ENCODE measurements at regions of chr16 and their contacts with region 1.

Region 1: DNA sequence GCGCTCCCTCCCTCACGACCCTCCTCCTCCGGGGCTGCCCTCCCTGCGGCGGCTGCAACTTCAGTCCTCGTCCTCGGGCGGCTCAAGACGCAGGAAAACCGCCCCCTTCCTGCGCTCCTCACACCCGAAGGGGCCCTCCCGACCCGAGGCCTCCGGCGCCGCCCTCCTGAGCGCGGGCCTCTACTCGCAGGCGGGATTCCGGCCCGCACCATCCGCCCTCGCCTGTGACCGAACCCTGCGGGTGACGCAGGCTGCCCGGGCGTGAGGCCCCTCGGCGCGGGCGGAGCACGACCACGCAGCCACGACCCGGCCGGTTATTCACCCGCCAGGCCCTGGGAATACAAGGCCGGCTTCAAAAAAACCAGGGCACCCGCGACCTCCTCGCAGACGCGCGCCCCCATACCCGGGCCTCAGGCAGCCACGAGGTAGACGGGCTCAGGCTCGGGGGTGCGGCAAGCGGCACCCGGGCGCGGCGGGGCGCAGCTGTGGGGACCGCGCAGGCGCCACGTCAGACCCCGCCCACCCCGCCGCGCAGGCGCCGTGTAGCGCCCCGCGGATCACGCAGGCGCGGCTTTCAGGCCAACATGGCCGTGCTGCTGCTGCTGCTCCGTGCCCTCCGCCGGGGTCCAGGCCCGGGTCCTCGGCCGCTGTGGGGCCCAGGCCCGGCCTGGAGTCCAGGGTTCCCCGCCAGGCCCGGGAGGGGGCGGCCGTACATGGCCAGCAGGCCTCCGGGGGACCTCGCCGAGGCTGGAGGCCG is at the start of gene SPG7:
- DNase-seq: peak; percentile 90
- ATAC-seq: peak; percentile 77
- H3K4me3 Mint-ChIP-seq: peak within 1 kb of the TSS; percentile 91
- H3K27ac Mint-ChIP-seq: peak within 1 kb of the TSS; percentile 92
- H3K4me1 Mint-ChIP-seq: peaks cover 38% of the 10 kb centered on the region
- H3K27me3 Mint-ChIP-seq: no peaks in the 10 kb centered on the region
- total RNA-seq, gene SPG7: 94.7 to 98.4 TPM

Region 2: DNA sequence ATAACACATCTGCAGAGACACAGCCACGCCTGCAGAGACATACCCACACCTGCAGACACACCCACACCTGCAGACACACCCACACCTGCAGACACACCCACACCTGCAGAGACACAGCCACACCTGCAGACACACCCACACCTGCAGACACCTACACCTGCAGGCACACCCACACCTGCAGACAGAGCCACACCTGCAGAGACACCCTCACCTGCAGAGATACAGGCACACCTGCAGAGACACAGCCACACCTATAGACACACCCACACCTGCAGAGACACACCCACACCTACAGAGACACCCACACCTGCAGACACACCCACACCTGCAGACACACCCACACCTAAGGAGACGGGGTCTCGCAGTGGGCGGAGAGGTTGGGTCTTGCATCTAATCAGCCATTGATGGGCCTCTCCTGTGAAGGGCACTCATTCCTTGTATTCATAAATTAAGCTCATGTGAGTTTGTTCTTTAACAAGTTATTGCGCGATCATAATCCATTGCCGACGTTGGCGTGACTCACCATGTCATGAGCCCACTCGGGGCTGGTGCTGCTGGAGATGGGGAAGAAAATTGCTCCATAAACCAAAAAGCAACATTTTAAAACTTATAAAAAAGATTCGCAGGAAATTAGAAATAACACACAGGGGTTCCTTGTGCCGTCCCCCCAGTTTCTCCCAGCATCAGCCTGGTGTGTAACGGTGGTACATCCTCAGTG is 365.4 kb before region 1 on chr16:
- CTCF ChIA-PET with region 1: no interaction called
- POLR2A ChIA-PET with region 1: no interaction called
- DNase-seq: no peak
- ATAC-seq: no peak
- H3K4me3 Mint-ChIP-seq: no peak overlapping the region
- H3K27ac Mint-ChIP-seq: no peak overlapping the region
- H3K4me1 Mint-ChIP-seq: no peaks in the 10 kb centered on the region
- H3K27me3 Mint-ChIP-seq: no peaks in the 10 kb centered on the region

Region 3: DNA sequence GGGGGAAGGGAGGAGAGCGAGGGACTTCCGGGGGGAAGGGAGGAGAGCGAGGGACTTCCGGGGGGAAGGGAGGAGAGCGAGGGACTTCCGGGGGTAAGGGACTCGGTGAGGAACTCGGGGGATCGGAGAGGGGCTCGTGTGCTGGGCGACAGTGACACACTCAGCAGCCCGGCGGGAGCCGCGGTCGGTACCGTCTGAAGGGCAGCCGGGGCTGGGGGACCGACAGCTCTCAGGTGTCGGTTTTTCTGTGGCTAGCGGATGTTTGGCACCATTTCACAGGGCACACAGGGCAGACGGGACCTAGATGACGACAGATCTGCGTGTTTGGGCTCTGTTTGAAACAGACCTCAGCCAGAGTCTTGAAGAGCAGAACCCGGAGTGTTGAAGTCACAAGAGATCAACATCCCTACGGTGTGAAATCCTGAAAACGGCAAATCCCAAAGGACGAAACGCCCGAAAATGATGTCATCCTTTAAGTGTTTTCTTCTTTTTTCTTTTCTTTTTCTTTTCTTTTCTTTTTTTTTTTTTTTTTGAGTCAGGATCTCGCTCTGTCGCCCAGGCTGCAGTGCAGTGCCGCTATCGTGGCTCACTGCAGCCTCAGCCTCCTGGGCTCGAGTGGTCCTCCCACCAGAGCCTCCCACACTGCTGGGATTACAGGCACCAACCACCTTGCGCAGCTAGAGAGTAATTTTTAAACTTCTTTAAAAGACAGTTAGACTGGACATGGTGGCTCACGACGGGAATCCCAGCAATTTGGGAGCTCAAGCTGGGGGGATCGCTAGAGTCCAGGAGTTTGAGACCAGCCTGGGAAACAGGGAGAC is 266.6 kb before region 1 on chr16:
- CTCF ChIA-PET with region 1: interaction called, 10 read pairs
- POLR2A ChIA-PET with region 1: no interaction called
- DNase-seq: peak; percentile 81
- ATAC-seq: peak; percentile 89
- H3K4me3 Mint-ChIP-seq: peak overlapping the region; percentile 99
- H3K27ac Mint-ChIP-seq: peak overlapping the region; percentile 100
- H3K4me1 Mint-ChIP-seq: peaks cover 22% of the 10 kb centered on the region
- H3K27me3 Mint-ChIP-seq: no peaks in the 10 kb centered on the region

Region 4: GRCh38 chr16:89297156-89297883 is 210.7 kb before region 1 on chr16:
- CTCF ChIA-PET with region 1: interaction called, 10 read pairs
- POLR2A ChIA-PET with region 1: no interaction called
- DNase-seq: no peak
- ATAC-seq: no peak
- H3K4me3 Mint-ChIP-seq: no peak overlapping the region
- H3K27ac Mint-ChIP-seq: peak overlapping the region; percentile 50
- H3K4me1 Mint-ChIP-seq: peaks cover 47% of the 10 kb centered on the region
- H3K27me3 Mint-ChIP-seq: no peaks in the 10 kb centered on the region

Region 5: DNA sequence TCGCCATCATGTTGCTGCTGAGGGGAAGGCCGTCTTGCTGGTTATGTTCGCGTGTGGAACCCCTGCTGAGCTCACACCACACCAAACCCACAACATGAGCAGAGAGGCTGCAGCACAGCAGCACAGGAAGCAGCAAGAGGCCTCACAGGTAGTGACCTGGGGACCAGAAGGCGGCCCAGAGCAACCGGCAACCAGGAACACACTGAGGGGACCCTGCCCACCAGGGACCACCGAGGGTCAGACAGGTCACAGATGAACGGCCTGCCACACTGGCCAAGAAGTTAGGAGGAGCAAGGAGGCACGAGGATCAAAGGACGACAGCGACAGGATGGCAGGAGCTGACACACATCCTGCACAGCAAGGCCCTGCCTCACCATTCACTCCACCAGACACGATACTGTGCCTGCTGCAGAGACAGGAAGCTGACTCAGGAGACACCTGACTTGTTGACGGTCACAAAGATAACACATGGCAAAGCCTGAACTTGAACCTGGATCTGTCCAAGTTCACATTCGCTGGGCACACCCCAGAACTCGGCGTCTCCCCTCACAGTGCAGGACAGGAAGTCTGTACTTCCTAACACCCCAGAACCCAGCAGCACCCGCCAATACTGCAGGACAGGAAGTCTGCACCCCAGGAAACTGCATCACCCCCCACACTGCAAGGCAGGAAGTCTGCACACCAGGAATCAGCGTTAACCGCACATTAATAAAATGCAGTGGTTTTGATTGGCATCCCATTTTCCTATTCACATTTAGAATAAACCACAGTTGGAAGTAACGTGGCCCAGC is 192.0 kb before region 1 on chr16:
- CTCF ChIA-PET with region 1: interaction called, 15 read pairs
- POLR2A ChIA-PET with region 1: interaction called, 5 read pairs
- DNase-seq: peak; percentile 90
- ATAC-seq: peak; percentile 88
- H3K4me3 Mint-ChIP-seq: peak overlapping the region; percentile 76
- H3K27ac Mint-ChIP-seq: peak overlapping the region; percentile 100
- H3K4me1 Mint-ChIP-seq: peaks cover 97% of the 10 kb centered on the region
- H3K27me3 Mint-ChIP-seq: no peaks in the 10 kb centered on the region

Region 6: GRCh38 chr16:89334988-89335802 is 172.8 kb before region 1 on chr16:
- CTCF ChIA-PET with region 1: interaction called, 12 read pairs
- POLR2A ChIA-PET with region 1: no interaction called
- DNase-seq: no peak
- ATAC-seq: no peak
- H3K4me3 Mint-ChIP-seq: no peak overlapping the region
- H3K27ac Mint-ChIP-seq: peak overlapping the region; percentile 48
- H3K4me1 Mint-ChIP-seq: peaks cover 75% of the 10 kb centered on the region
- H3K27me3 Mint-ChIP-seq: no peaks in the 10 kb centered on the region

Region 7: GRCh38 chr16:89490387-89491237 is 17.4 kb before region 1 on chr16 and contains the start of gene ANKRD11:
- CTCF ChIA-PET with region 1: interaction called, 8 read pairs
- POLR2A ChIA-PET with region 1: interaction called, 25 read pairs
- DNase-seq: peak; percentile 100
- ATAC-seq: peak; percentile 90
- H3K4me3 Mint-ChIP-seq: peak within 1 kb of the TSS; percentile 89
- H3K27ac Mint-ChIP-seq: peak within 1 kb of the TSS; percentile 88
- H3K4me1 Mint-ChIP-seq: peaks cover 54% of the 10 kb centered on the region
- H3K27me3 Mint-ChIP-seq: no peaks in the 10 kb centered on the region
- total RNA-seq, gene ANKRD11: 157 to 175 TPM

Measured in activated CD8-positive, alpha-beta T cell treated with anti-CD3 and anti-CD28 coated beads, Interleukin-2, amount 10 ng/mL, durations not matched to agents 7 days and 5 days (primary cell).